Activated T-helper 1 cell treated with anti-CD3 and anti-CD28 coated beads, Interleukin-12 subunit alpha, Interleukin-12 subunit beta, Interleukin-2, Interleukin-4 antibody, amounts not matched to agents 30 ng/mL and 10 ng/mL and 1 ng/mL, durations not matched to agents 14 hours and 24 hours and 36 hours (primary cell): ENCODE measurements at regions of chr11 and their contacts with region 1.

Region 1: DNA sequence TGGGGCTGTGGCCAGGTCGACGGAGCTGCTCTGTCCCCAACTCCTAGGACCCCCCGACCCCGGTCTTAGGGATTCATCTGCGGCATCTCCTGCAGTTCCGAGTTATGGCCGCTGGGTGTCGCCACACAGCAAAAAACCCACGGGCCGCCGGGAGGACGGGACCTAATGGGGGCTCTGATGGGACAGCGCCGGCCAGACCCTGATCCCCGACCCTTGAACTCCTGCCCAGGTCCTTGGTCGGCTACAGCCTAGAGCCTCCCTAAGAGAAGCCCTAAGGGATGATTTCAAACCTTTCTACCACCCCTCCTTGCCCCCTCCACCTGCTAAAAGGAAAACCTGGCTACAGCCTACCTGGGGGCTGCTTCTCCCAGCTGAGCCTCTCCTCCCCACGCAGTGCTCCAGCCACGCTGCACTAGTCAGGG is 30.8 kb upstream of the LRRC10B start:
- DNase-seq: peak; percentile 19
- H3K4me3 Mint-ChIP-seq: no peak overlapping the region
- H3K27ac Mint-ChIP-seq: no peak overlapping the region
- H3K4me1 Mint-ChIP-seq: peaks cover 8% of the 10 kb centered on the region
- H3K27me3 Mint-ChIP-seq: no peaks in the 10 kb centered on the region

Region 2: DNA sequence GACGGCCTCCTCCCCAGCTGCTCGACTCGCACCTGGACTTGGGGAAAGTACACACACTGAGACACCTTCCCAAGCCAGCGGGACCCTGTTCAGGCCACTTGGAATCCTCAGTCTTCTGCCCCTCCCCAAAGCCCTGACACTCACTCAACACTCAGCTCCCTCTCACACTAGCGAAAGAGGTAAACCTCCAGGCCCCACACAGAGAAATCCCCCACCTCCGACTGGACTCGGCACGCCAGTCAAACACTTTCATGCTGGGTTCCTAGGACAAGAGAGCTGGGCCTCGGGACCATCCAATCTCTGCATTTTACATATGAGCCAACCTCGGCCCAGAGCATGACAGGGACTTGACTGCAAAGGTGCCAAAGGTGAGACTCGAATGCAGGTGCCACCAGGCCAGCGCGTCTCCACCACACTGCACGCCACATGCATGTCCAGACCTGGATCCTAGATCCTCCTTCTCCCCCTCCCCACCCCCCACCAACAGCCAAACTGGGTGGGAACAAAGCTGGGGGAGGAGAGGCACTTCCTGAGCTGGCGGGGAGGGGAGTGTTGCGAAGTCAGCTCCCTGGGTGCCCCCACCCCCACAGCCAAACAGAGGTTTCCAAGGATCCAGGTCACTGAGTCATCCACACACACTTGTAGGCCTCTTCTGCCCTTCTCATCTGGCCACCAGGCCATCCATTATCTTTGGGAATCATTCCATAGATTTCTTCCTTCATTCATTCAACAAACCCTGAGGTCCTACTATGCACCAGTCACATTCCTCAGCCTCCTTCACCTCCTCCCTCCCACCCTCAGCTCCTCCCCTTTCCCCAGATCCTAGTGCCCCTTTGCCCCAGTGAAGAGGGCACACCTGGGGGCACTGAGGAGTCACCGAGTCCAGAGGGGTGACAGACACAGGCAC is 386.1 kb before region 1 on chr11:
- intact Hi-C with region 1: no loop called
- DNase-seq: peak; percentile 41
- H3K4me3 Mint-ChIP-seq: peak overlapping the region; percentile 96
- H3K27ac Mint-ChIP-seq: peak overlapping the region; percentile 98
- H3K4me1 Mint-ChIP-seq: peaks cover 77% of the 10 kb centered on the region
- H3K27me3 Mint-ChIP-seq: no peaks in the 10 kb centered on the region

Region 3: GRCh38 chr11:61516675-61517572 is 39.2 kb after region 1 on chr11:
- intact Hi-C with region 1: loop called (anchors 1 kb)
- DNase-seq: peak; percentile 32
- H3K4me3 Mint-ChIP-seq: no peak overlapping the region
- H3K27ac Mint-ChIP-seq: no peak overlapping the region
- H3K4me1 Mint-ChIP-seq: no peaks in the 10 kb centered on the region
- H3K27me3 Mint-ChIP-seq: peaks cover 7% of the 10 kb centered on the region

Region 4: GRCh38 chr11:61581030-61581928 is 103.5 kb after region 1 on chr11 and contains the start of gene SYT7:
- intact Hi-C with region 1: no loop called
- DNase-seq: peak; percentile 90
- H3K4me3 Mint-ChIP-seq: peak within 1 kb of the TSS; percentile 80
- H3K27ac Mint-ChIP-seq: peak within 1 kb of the TSS; percentile 9
- H3K4me1 Mint-ChIP-seq: peaks cover 9% of the 10 kb centered on the region
- H3K27me3 Mint-ChIP-seq: peaks cover 48% of the 10 kb centered on the region
- total RNA-seq, gene SYT7: 0.32 and 0.44 TPM in 2 replicates

Region 5: DNA sequence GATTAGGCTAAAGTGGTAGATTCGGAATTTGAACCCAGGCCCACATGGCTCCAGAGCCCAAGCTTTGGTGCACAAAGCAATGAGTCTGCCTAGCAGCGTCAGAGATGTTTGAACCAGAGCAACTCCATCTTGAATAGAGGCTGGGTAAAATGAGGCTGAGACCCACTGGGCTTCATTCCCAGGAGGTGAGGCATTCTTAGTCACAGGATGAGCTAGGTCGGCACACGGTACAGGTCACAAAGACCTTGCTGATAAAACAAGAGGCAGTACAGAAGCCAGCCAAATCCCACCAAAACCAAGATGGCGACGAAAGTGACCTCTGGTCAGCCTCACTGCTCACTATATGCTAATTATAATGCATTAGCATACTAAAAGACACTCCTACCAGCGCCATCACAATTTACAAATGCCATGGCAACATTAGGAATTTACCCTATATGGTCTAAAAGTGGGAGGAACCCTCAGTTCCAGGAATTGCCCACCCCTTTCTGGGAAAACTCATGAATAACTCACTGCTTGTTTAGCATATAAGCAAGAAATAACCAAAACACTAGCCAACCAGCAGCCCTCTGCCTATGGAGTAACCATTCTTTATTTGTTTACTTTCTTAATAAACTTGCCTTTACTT is 162.2 kb after region 1 on chr11:
- intact Hi-C with region 1: loop called (anchors 1 kb)
- DNase-seq: no peak
- H3K4me3 Mint-ChIP-seq: no peak overlapping the region
- H3K27ac Mint-ChIP-seq: no peak overlapping the region
- H3K4me1 Mint-ChIP-seq: no peaks in the 10 kb centered on the region
- H3K27me3 Mint-ChIP-seq: peaks cover 2% of the 10 kb centered on the region